PC-9 (cell line): ENCODE measurements at regions of chr19 and their contacts with region 1.

Region 1: DNA sequence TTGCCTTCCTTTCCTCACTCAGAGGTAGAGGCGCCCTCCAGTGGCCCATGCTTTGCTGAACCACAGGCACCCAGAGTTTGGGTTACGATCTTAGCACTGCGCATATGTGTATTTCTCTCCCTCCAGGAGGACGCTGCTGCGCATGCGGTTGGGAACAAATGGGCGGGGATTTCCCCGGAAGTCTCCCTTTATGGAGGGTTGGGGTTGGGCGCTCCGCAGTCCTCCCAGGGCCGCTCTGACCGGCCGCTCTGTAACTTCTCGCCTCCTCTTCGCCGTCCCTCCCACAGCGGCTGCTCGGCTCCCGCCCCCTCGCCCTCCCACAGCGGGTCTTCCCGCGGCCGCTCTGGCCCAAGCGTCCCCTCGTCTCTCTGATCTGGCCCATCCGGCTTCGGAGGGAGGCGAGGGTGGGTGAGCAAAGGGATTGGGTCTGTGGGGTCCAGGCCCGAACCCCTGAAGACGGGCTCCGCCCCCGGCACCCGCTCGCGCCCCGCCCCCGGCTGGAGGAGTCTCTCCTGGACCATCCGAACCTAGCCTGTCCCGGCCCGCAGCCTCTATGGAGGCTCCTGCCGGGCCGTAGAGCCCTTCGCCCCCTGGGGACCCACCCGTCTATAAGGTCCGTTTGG is at the start of gene MEGF8:
- DNase-seq: peak; percentile 96 to 98
- H3K4me3 ChIP-seq: peak within 1 kb of the TSS; percentile 94
- H3K27ac ChIP-seq: no peak within 1 kb of the TSS
- H3K4me1 ChIP-seq: peaks cover 14% of the 10 kb centered on the region
- H3K27me3 ChIP-seq: no peaks in the 10 kb centered on the region
- CTCF ChIP-seq: no peak; the same call in none of the 2 replicates
- total RNA-seq, gene MEGF8: 40.6 and 49.0 TPM in 2 replicates

Region 2: GRCh38 chr19:42108527-42109389 is 216.6 kb before region 1 on chr19:
- CTCF ChIA-PET with region 1: no interaction called
- POLR2A ChIA-PET with region 1: no interaction called
- intact Hi-C with region 1: loop called (anchors 1 kb)
- DNase-seq: peak; percentile 70 to 83
- H3K4me3 ChIP-seq: no peak overlapping the region
- H3K27ac ChIP-seq: no peak overlapping the region
- H3K4me1 ChIP-seq: peaks cover 14% of the 10 kb centered on the region
- H3K27me3 ChIP-seq: no peaks in the 10 kb centered on the region
- CTCF ChIP-seq: peak; percentile 98

Region 3: DNA sequence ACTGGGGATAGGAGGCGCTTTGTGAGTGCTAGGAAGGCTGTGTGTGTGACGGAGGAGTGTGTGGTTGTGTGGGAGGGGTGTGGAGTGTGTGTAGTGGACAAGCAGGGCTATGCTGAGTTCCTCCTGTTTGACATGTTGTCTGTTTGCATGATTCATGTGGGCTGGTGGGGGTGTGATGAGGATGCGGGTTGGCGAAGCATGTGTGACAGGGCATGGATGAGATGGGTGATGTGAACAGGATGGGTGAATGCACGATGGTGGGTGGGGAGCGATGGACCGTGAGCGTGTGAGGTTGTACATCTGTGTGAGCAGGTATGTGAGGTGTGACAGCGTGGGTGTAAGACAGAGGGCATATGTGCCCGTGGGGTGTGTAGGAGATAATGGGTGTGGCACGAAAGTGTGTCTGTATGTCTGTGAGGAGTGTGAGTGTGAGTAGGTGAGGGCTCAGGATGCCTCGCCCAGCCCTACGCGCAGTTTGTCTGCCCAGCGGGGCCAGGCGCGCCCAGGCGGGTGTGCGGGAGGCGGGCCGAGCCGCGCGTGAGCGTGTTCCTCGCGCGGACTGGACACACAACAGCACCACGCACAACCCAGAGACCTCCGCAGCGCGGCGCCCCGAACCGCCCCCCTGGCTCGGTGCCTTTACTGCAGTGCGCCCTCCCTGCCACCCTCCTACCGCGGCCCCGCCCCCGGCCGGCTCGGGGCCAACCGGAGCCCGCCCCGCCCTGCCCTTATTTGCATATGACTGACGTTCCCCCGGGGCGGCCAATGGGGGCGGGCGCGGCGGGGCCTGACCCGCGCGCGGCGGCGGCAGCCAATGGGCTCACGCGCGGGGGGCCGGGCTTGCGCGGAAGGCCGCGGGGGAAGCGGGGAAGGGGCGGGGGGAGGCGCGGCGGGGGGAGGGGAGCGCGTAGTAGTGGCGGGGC is 42.0 kb before region 1 on chr19:
- CTCF ChIA-PET with region 1: no interaction called
- POLR2A ChIA-PET with region 1: no interaction called
- intact Hi-C with region 1: loop called (anchors 1 kb)
- DNase-seq: peak; percentile 71 to 94
- H3K4me3 ChIP-seq: peak overlapping the region; percentile 66
- H3K27ac ChIP-seq: no peak overlapping the region
- H3K4me1 ChIP-seq: peaks cover 42% of the 10 kb centered on the region
- H3K27me3 ChIP-seq: no peaks in the 10 kb centered on the region
- CTCF ChIP-seq: no peak

Region 4: GRCh38 chr19:42301656-42302203 is 23.7 kb before region 1 on chr19 and contains the start of gene PRR19:
- CTCF ChIA-PET with region 1: no interaction called
- POLR2A ChIA-PET with region 1: no interaction called
- intact Hi-C with region 1: loop called (anchors 1 kb)
- DNase-seq: no peak
- H3K4me3 ChIP-seq: peak within 1 kb of the TSS; percentile 78
- H3K27ac ChIP-seq: no peak within 1 kb of the TSS
- H3K4me1 ChIP-seq: peaks cover 7% of the 10 kb centered on the region; the same call in 1 of the 2 replicates
- H3K27me3 ChIP-seq: no peaks in the 10 kb centered on the region
- CTCF ChIP-seq: no peak
- total RNA-seq, gene PRR19: 0.85 and 1.1 TPM in 2 replicates

Region 5: GRCh38 chr19:42396381-42397262 is 71.2 kb after region 1 on chr19:
- CTCF ChIA-PET with region 1: no interaction called
- POLR2A ChIA-PET with region 1: interaction called, 13 read pairs
- intact Hi-C with region 1: loop called (anchors 2 kb)
- DNase-seq: peak; percentile 99 to 100
- H3K4me3 ChIP-seq: peak overlapping the region; percentile 71
- H3K27ac ChIP-seq: peak overlapping the region; percentile 86
- H3K4me1 ChIP-seq: peaks cover 34% of the 10 kb centered on the region
- H3K27me3 ChIP-seq: no peaks in the 10 kb centered on the region
- CTCF ChIP-seq: no peak

Region 6: GRCh38 chr19:42433503-42434260 is 108.3 kb after region 1 on chr19:
- CTCF ChIA-PET with region 1: no interaction called
- POLR2A ChIA-PET with region 1: no interaction called
- intact Hi-C with region 1: loop called (anchors 5 kb)
- DNase-seq: peak; percentile 55 to 76
- H3K4me3 ChIP-seq: no peak overlapping the region
- H3K27ac ChIP-seq: peak overlapping the region; percentile 45
- H3K4me1 ChIP-seq: peaks cover 9% of the 10 kb centered on the region
- H3K27me3 ChIP-seq: no peaks in the 10 kb centered on the region
- CTCF ChIP-seq: peak; percentile 78